ENCODE measurements at regions of chr6 and their contacts with region 1.

Region 1: DNA sequence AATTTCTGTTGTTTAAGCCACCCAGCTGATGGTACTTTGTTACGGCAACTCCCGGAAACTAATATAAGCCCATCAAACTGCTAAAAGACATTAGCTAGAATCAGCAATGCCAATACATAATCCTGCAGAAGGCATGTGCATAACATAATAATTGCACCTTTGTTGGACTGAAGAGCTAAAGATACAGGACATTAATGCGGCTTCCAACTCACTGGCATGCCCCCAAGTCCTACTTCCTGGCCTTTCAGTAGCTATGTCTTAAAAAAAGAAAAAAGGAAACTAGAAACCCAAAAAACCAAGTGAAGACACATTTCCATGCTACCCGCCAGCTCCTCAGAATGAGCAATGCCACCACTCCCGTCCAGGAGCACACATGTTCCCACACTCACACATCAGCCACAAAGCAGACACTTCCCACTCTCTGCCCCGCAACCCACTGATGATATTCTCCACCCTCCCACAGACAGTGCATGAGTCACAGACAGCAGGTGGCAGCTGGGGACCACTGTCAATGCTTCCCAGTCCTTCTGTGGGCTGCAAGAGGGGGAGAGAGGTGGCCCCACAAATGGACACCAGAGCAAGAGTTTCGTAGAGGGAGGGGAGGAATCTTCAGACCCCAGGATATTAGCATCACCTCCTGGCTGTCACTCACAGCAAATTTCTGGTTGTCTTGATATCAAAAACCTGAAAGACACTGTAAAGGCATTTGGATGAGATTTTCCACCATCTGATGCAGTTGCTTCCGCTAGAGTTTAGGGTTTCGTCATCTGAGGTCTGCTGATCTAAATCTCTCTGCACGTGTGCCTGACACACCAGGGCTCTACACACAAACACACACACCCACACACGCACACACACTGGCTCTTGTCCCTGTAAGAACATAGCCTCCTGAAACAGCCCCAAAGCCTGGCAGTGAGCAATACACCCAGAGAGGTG is 32.8 kb downstream of the GFOD1 start:
- DNase-seq: peak; percentile 41
- H3K4me3 ChIP-seq: peak overlapping the region; percentile 6
- H3K27ac ChIP-seq: peak overlapping the region; percentile 28
- H3K4me1 ChIP-seq: peaks cover 60% of the 10 kb centered on the region
- CTCF ChIP-seq: peak; percentile 68

Region 2: GRCh38 chr6:13272131-13273046 is 182.2 kb before region 1 on chr6:
- CTCF ChIA-PET with region 1: no interaction called
- POLR2A ChIA-PET with region 1: no interaction called
- intact Hi-C with region 1: loop called (anchors 5 kb)
- DNase-seq: peak; percentile 84
- H3K4me3 ChIP-seq: peak overlapping the region; percentile 71
- H3K27ac ChIP-seq: peak overlapping the region; percentile 65
- H3K4me1 ChIP-seq: peaks cover 68% of the 10 kb centered on the region
- CTCF ChIP-seq: peak; percentile 52; the same call in 1 of the 2 replicates

Region 3: GRCh38 chr6:13395272-13396237 is 59.0 kb before region 1 on chr6:
- CTCF ChIA-PET with region 1: interaction called, 3 read pairs
- POLR2A ChIA-PET with region 1: interaction called, 3 read pairs
- intact Hi-C with region 1: loop called (anchors 5 kb)
- DNase-seq: peak; percentile 32
- H3K4me3 ChIP-seq: peak overlapping the region; percentile 46
- H3K27ac ChIP-seq: no peak overlapping the region
- H3K4me1 ChIP-seq: peaks cover 73% of the 10 kb centered on the region
- CTCF ChIP-seq: no peak

Region 4: GRCh38 chr6:13413900-13414555 is 40.5 kb before region 1 on chr6:
- CTCF ChIA-PET with region 1: no interaction called
- POLR2A ChIA-PET with region 1: no interaction called
- intact Hi-C with region 1: no loop called
- DNase-seq: no peak
- H3K4me3 ChIP-seq: no peak overlapping the region
- H3K27ac ChIP-seq: no peak overlapping the region
- H3K4me1 ChIP-seq: no peaks in the 10 kb centered on the region
- CTCF ChIP-seq: no peak

Region 5: DNA sequence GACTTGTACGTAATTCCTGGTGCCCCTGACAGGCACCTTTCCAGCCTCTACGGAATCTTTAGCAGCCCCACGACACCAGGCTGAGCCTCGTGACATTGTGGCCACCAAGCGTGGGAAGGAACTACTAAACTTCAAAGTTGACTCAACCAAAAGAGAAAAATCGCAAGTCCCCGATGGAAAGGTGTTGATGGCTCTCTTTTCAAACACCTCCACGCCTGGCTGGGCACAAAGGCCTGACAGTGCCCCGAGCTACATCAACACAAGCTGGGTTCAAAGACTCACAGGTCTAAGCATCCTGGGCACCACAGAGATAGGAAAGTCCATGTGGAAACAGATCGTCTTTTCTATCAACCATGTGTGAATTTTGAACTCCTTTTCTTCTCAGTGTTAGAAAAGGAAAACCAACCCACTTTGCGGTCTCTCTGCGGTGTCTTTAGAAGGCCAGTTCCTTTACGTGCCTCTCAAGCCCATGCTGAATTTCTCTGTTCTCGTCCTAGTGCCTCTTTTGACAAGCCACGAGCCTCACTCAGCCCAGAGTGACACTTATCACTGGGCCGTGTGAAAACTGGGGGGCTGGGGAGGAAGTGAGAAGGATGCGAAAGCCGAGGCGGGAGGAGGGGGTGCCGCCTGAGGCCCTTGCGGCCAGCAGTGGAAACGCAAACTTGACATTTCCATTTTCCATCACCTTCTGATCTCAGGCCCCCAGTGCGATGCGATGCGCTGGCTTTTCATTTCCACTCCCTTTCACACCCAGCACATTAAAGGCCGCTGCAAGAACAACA is 26.6 kb before region 1 on chr6:
- CTCF ChIA-PET with region 1: interaction called, 4 read pairs
- POLR2A ChIA-PET with region 1: interaction called, 8 read pairs
- intact Hi-C with region 1: loop called (anchors 2 kb)
- DNase-seq: peak; percentile 72
- H3K4me3 ChIP-seq: peak overlapping the region; percentile 6
- H3K27ac ChIP-seq: peak overlapping the region; percentile 15
- H3K4me1 ChIP-seq: peaks cover 61% of the 10 kb centered on the region
- CTCF ChIP-seq: peak; percentile 62

Region 6: GRCh38 chr6:13466304-13467215 is 12.0 kb after region 1 on chr6:
- CTCF ChIA-PET with region 1: interaction called, 5 read pairs
- POLR2A ChIA-PET with region 1: interaction called, 10 read pairs
- intact Hi-C with region 1: no loop called
- DNase-seq: no peak
- H3K4me3 ChIP-seq: peak overlapping the region; percentile 2
- H3K27ac ChIP-seq: no peak overlapping the region
- H3K4me1 ChIP-seq: peaks cover 79% of the 10 kb centered on the region
- CTCF ChIP-seq: no peak

Region 7: GRCh38 chr6:13538084-13538483 is 83.5 kb after region 1 on chr6:
- CTCF ChIA-PET with region 1: interaction called, 4 read pairs
- POLR2A ChIA-PET with region 1: interaction called, 7 read pairs
- intact Hi-C with region 1: loop called (anchors 1 kb)
- DNase-seq: peak; percentile 69
- H3K4me3 ChIP-seq: no peak overlapping the region
- H3K27ac ChIP-seq: no peak overlapping the region
- H3K4me1 ChIP-seq: peaks cover 65% of the 10 kb centered on the region
- CTCF ChIP-seq: peak; percentile 85

Region 8: DNA sequence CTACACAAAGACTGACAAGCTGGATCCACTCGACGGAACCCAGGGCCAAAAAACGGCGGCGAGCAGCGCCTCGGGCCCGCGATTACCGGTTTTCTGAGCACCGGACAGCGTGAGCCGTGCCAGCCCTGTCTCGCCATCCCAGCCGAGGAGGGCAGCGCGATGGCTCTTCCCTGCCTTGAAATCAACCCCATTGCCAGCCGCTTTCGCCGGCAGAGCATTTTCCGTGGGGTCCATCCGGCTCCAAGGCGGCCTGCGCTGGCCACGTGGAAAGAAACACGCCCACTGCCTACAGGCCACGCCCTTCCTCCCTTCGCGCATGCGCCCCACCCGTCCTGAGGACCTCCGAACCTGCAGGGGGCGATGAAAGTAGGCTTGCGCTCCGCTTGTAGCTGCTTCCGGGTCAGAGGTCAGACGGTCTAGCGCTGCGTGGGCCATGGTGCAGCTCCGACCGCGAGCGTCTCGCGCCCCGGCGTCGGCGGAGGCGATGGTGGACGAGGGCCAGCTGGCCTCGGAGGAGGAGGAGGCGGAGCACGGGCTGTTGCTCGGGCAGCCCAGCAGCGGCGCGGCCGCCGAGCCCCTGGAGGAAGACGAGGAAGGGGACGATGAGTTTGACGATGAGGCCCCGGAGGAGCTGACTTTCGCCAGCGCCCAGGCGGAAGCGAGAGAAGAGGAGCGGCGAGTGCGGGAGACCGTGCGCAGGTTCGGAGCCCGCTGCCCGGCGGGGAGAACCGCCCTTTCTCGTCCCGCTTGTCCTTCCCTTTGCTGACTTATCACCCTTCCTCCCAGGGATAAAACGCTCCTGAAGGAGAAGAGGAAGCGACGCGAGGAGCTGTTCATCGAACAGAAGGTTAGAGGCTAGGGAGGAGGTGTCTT is 160.6 kb after region 1 on chr6 and contains the start of gene NOL7:
- CTCF ChIA-PET with region 1: no interaction called
- POLR2A ChIA-PET with region 1: interaction called, 3 read pairs
- intact Hi-C with region 1: loop called (anchors 2 kb)
- DNase-seq: peak; percentile 99
- H3K4me3 ChIP-seq: peak within 1 kb of the TSS; percentile 98
- H3K27ac ChIP-seq: peak within 1 kb of the TSS; percentile 73
- H3K4me1 ChIP-seq: peaks cover 54% of the 10 kb centered on the region
- CTCF ChIP-seq: peak; percentile 81
- total RNA-seq, gene NOL7: 67.5 and 92.4 TPM in 2 replicates

Region 9: DNA sequence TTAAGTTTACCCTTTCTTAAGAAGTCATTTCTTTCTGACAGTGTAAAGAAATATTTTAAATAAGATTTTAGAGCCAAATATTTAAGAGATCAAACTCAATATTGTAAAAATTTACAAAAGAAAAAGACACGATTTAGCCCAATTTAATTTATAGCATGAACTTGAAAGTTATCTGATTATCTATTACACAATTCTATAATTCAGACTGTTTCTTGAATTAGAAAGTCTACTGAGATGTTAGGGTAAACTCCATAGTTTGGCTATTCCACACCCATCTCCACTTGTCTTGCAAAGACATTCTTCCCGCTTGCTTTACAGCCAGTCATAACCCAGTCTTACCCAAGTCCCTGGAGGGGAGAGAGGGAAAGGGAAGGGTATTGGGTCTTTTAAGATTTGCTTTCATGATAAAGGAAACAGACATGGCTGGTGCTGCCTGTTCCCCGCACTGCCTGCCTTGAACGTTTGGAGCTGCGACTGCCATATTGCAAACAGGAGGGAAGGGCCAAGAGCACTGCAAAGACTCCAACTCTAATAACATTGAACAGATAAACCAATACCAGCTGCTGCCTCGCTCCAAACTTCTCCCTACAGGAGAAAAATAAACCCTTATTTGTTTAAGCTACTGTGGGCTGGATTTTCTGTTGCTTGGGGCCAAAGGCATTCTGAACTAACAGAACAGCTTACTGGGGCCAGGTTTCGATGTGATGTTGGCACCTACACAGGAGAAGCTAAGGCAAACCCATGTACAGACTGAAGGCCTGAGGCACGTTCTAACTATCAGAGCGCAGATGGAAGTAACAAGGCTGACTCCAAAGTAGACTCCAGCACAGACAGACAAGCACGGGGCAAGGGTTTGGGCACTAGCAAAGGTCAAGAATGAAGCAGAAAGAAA is 1239.0 kb after region 1 on chr6:
- CTCF ChIA-PET with region 1: no interaction called
- POLR2A ChIA-PET with region 1: no interaction called
- intact Hi-C with region 1: no loop called
- DNase-seq: no peak
- H3K4me3 ChIP-seq: no peak overlapping the region
- H3K27ac ChIP-seq: no peak overlapping the region
- H3K4me1 ChIP-seq: no peaks in the 10 kb centered on the region
- CTCF ChIP-seq: no peak

Measured in OCI-LY7 (cell line).